ENCODE measurements at regions of chr11 and their contacts with region 1.

Region 1: GRCh38 chr11:59783632-59784090 is 26.9 kb downstream of the MRPL16 start:
- DNase-seq: no peak
- H3K4me3 Mint-ChIP-seq: no peak overlapping the region
- H3K27ac Mint-ChIP-seq: peak overlapping the region; percentile 54
- H3K4me1 Mint-ChIP-seq: peaks cover 58% of the 10 kb centered on the region
- H3K27me3 Mint-ChIP-seq: no peaks in the 10 kb centered on the region

Region 2: DNA sequence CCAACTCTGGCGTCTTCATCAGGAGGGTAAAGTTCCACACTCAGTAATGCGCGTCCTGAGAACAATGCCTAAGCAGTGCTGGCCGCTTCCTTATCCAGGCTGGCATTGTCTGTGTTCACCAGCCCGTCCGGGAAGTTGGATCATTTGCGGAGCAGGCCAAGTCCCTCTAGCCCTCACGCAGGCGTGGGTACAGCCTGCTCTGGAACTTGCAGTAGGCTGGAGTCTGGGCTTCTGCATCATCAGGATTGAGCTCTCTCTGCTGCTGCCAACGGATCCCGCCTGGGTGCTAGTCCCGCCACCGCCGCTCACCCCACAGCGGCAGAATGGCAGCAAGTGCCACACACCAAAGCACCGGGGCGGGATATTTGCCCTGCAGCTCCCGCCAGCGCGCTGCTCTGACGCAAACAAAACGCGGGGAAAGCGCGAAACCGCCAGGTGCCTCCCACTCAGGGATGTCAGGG is 815.4 kb before region 1 on chr11:
- intact Hi-C with region 1: no loop called
- DNase-seq: no peak
- H3K4me3 Mint-ChIP-seq: no peak overlapping the region
- H3K27ac Mint-ChIP-seq: no peak overlapping the region
- H3K4me1 Mint-ChIP-seq: no peaks in the 10 kb centered on the region
- H3K27me3 Mint-ChIP-seq: no peaks in the 10 kb centered on the region

Region 3: GRCh38 chr11:59224351-59224928 is 559.2 kb before region 1 on chr11:
- intact Hi-C with region 1: no loop called
- DNase-seq: no peak
- H3K4me3 Mint-ChIP-seq: no peak overlapping the region
- H3K27ac Mint-ChIP-seq: no peak overlapping the region
- H3K4me1 Mint-ChIP-seq: no peaks in the 10 kb centered on the region
- H3K27me3 Mint-ChIP-seq: peaks cover 9% of the 10 kb centered on the region

Region 4: GRCh38 chr11:59767225-59767611 is 16.4 kb before region 1 on chr11:
- intact Hi-C with region 1: loop called (anchors 1 kb)
- DNase-seq: peak; percentile 26
- H3K4me3 Mint-ChIP-seq: peak overlapping the region; percentile 55
- H3K27ac Mint-ChIP-seq: peak overlapping the region; percentile 61
- H3K4me1 Mint-ChIP-seq: peaks cover 20% of the 10 kb centered on the region
- H3K27me3 Mint-ChIP-seq: no peaks in the 10 kb centered on the region

Region 5: DNA sequence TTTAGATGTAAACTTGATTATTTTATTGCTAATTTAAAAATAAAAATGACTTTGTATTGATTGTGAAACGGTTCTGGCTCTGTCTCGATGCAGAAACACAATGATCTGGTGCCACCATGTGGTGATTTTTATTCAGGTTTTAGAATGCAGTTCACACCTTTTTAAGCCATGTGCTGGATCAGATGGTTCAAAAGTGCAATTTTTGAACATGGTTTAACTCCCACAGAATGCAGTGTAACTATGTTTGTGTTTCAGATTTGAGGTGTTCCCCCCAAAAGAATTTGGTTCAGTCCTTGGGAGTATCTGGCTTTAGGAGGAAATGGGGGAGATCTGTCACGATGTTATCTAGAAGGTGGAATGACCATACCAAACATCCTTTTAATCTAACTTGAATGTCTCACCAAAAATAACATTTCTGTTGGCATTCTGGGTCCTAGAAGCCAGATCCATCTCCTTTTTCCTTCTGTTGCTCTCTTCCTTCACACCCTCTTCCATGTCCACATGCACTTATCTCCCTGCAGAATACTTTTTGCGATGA is 19.0 kb after region 1 on chr11:
- intact Hi-C with region 1: loop called (anchors 2 kb)
- DNase-seq: peak; percentile 50
- H3K4me3 Mint-ChIP-seq: no peak overlapping the region
- H3K27ac Mint-ChIP-seq: no peak overlapping the region
- H3K4me1 Mint-ChIP-seq: peaks cover 24% of the 10 kb centered on the region
- H3K27me3 Mint-ChIP-seq: no peaks in the 10 kb centered on the region

Region 6: GRCh38 chr11:59814021-59814420 is 30.4 kb after region 1 on chr11:
- intact Hi-C with region 1: no loop called
- DNase-seq: no peak
- H3K4me3 Mint-ChIP-seq: no peak overlapping the region
- H3K27ac Mint-ChIP-seq: no peak overlapping the region
- H3K4me1 Mint-ChIP-seq: peaks cover 27% of the 10 kb centered on the region
- H3K27me3 Mint-ChIP-seq: no peaks in the 10 kb centered on the region

Region 7: GRCh38 chr11:60098508-60098907 is 314.8 kb after region 1 on chr11:
- intact Hi-C with region 1: no loop called
- DNase-seq: no peak
- H3K4me3 Mint-ChIP-seq: no peak overlapping the region
- H3K27ac Mint-ChIP-seq: no peak overlapping the region
- H3K4me1 Mint-ChIP-seq: no peaks in the 10 kb centered on the region
- H3K27me3 Mint-ChIP-seq: no peaks in the 10 kb centered on the region